Activated T-helper 2 cell treated with anti-CD3 and anti-CD28 coated beads, Interferon-gamma antibody, Interleukin-2, Interleukin-4, amounts not matched to agents 10 μg/mL and 5 μg/mL and 100 μg/mL, durations not matched to agents 14 hours and 24 hours and 36 hours (primary cell): ENCODE measurements at regions of chrX and their contacts with region 1.

Region 1: DNA sequence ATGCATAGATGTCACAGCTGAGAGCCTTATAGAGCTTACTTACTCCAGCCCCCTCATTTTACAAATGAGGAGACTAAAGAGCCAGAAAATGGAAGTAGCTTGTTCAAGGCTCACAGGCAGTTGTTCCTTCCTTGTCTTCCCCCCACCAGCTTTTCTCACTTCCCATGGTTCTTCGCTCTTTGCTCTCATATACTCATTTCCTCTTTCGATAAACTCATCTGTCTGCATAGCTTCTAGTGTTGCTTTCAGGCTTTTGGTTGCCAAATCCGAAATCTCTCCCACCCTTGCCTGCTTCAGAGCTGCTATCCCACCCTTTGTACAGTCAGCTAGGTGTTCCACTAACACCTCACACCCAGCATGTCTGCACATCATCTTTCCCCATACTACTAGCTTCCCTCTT is 25.0 kb upstream of the GJB1 start:
- DNase-seq: no peak
- H3K4me3 Mint-ChIP-seq: peak overlapping the region; percentile 86
- H3K27ac Mint-ChIP-seq: peak overlapping the region; percentile 88
- H3K4me1 Mint-ChIP-seq: peaks cover 15% of the 10 kb centered on the region
- H3K27me3 Mint-ChIP-seq: no peaks in the 10 kb centered on the region

Region 2: GRCh38 chrX:71254092-71254941 is 56.3 kb after region 1 on chrX and contains the start of gene ZMYM3:
- intact Hi-C with region 1: loop called (anchors 1 kb)
- DNase-seq: peak; percentile 72
- H3K4me3 Mint-ChIP-seq: peak within 1 kb of the TSS; percentile 88
- H3K27ac Mint-ChIP-seq: peak within 1 kb of the TSS; percentile 93
- H3K4me1 Mint-ChIP-seq: peaks cover 27% of the 10 kb centered on the region
- H3K27me3 Mint-ChIP-seq: no peaks in the 10 kb centered on the region
- total RNA-seq, gene ZMYM3: 26.8 and 31.4 TPM in 2 replicates